HEK293 (cell line): ENCODE measurements at regions of chr5 and their contacts with region 1.

Region 1: DNA sequence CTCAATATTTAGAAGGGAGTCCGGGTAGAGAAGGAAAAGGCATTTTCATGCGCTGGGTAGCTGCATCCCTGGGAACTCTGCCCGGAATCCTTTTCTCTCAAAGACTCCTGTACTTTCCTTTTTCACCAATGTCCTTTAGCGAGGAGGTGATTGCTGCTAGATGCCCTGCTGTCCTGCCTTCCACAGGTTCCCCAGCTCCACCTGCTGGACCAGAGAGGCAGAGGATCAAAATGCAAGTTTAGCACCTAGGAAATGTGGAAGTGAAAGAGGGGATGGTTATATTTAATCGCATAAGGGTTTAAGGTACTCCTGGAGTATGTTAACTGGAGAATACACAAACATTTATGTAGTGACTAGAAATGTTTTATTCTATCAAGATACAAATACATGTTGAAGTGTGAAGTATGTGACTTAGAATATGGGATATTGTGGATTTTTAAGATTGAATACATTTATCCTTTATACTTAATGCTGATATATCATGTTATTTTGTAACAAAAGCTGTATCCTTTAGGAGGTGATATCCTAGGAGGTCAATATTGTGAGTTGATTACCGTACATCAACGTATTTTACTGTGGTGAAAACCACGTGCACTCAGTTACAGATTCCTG is 145.7 kb downstream of the ARHGAP26 start:
- H3K4me3 ChIP-seq: no peak overlapping the region
- H3K27ac ChIP-seq: no peak overlapping the region
- H3K4me1 ChIP-seq: no peaks in the 10 kb centered on the region
- CTCF ChIP-seq: peak; percentile 57; the same call in 1 of the 2 replicates

Region 2: DNA sequence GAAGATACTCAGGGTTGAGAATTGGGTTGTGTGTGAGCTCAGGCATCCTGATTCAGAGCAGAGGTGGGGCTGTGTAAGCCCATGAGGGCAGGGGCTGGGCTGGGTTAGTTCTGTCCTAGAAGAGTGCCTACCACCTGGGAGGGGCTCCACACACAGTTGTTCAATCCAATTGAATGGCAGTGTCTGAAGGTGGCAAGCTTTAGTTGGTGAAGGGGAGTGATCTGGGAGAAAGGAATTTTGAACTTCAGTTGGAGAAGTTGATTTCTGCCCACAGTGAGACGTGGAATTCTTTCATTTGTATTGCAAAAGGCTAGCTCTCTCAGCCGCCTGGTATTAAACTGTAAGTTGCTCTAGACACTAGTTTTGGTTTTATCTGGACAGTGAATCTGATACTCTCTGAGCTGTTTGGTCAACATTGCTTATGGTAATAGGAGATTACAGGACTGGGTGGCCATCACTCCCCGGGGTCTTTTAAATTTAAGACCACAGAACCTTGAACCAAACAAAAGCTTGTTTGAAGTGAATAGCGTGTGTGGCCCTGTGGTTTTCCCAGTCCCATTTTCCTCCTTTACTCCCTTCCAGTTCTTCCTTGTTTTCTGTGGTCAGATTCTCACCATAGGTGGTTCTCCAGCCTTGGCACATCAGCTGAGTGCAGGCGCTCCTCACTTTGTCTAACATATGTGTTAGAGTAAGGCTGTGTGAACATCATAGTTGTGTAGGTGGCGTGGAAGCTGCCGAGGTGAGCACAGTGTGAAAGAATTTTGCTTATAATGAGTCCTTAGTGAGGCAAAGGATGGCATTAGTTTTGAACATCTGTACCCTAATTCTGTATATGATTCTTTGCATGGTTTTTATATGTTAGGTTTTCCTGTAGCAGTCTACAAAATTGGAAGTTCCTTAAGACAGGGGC is 67.8 kb before region 1 on chr5:
- CTCF ChIA-PET with region 1: no interaction called
- POLR2A ChIA-PET with region 1: no interaction called
- H3K4me3 ChIP-seq: no peak overlapping the region
- H3K27ac ChIP-seq: no peak overlapping the region; the same call in 1 of the 2 replicates
- H3K4me1 ChIP-seq: peaks cover 15% of the 10 kb centered on the region
- CTCF ChIP-seq: no peak

Region 3: GRCh38 chr5:142888469-142889085 is 27.3 kb before region 1 on chr5:
- CTCF ChIA-PET with region 1: interaction called, 49 read pairs
- POLR2A ChIA-PET with region 1: no interaction called
- H3K4me3 ChIP-seq: no peak overlapping the region
- H3K27ac ChIP-seq: no peak overlapping the region
- H3K4me1 ChIP-seq: no peaks in the 10 kb centered on the region
- CTCF ChIP-seq: peak; percentile 26; the same call in 1 of the 2 replicates

Region 4: DNA sequence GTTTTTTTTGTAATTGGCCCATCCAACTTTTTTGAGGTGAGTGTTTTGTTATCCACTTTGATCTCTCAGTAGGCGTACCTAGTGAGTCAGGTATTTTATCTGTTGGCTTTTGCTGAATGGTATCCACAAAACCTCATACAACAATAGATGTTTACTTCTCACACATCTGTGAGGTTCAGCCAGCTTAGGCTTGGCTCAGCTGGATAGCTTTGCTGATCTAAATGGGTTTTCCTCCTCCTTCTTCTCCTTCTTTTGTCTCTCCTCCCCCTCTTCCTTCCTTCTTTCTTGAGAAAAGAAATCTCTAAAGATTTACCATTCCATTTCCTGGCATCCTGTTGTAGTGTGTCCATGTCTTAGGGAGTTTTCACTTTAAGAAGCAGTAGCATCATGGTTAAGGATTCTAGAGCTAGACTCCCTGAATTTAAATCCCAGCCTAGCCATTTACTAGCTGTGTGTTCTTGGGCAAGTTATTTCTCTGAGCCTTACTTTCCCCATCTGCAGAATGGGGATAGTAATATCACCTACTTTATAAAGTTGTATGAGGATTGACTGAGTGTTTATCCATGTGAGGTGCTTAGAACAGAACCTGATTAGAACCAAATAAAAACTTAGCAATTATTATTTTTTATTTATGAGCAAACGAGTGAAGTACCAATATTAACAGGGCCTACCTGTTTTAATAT is 19.5 kb before region 1 on chr5:
- CTCF ChIA-PET with region 1: interaction called, 49 read pairs
- POLR2A ChIA-PET with region 1: no interaction called
- H3K4me3 ChIP-seq: no peak overlapping the region
- H3K27ac ChIP-seq: no peak overlapping the region
- H3K4me1 ChIP-seq: 0 out of 2 replicates have a peak, but pooled peaks cover 4% of the 10 kb centered on the region
- CTCF ChIP-seq: no peak